Endothelial cell of umbilical vein (primary cell): ENCODE measurements at regions of chr18 and their contacts with region 1.

Region 1: DNA sequence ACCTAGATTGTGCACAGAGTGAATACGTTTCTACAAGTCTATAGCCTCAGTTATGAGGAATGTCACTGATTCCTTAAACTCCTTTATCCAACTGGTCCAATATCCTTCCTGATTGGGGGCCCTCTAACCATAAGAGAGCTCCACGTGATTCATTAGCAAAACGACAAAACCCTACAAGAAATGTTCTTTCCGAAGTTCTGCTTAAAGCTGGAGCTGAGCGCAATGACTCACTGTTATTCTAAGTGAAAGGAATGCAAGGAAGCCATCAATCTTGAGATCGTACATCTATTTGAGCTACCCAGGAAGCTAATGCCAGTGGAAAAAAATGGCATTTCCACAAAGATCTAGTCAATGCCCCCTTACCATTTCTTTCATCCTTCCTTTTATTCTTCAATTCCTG is 354.9 kb upstream of the CDH20 start:
- DNase-seq: peak; percentile 93
- H3K4me3 ChIP-seq: no peak overlapping the region
- H3K27ac ChIP-seq: peak overlapping the region; percentile 21
- H3K4me1 ChIP-seq: peaks cover 45% of the 10 kb centered on the region
- H3K27me3 ChIP-seq: no peaks in the 10 kb centered on the region
- CTCF ChIP-seq: no peak
- POLR2A ChIP-seq: no peak

Region 2: DNA sequence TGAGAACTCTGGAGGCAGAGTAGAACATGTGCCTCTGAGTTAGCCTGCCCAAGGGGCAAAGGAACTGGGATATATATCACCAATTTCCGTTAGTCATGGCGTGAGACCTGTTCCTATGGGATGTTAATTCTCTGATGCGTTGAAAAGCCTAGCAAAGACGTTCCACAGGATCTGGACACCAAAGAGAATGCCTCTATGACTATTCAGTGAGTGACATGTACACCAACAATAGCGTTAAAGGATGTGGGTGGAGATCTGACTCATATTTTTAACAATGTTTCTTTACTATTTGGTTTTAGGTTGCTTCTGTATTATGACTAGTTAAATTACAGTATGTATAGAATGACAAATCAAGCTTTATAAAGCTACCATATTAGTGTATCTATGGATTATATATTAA is 284.9 kb before region 1 on chr18:
- CTCF ChIA-PET with region 1: no interaction called
- POLR2A ChIA-PET with region 1: no interaction called
- dilution Hi-C with region 1: no loop called
- intact Hi-C with region 1: loop called (anchors 5 kb)
- DNase-seq: peak; percentile 65
- H3K4me3 ChIP-seq: no peak overlapping the region
- H3K27ac ChIP-seq: peak overlapping the region; percentile 44
- H3K4me1 ChIP-seq: peaks cover 9% of the 10 kb centered on the region
- H3K27me3 ChIP-seq: no peaks in the 10 kb centered on the region
- CTCF ChIP-seq: no peak
- POLR2A ChIP-seq: no peak

Region 3: GRCh38 chr18:60754413-60755009 is 223.8 kb before region 1 on chr18:
- CTCF ChIA-PET with region 1: no interaction called
- POLR2A ChIA-PET with region 1: no interaction called
- dilution Hi-C with region 1: no loop called
- intact Hi-C with region 1: loop called (anchors 2 kb)
- DNase-seq: peak; percentile 87
- H3K4me3 ChIP-seq: peak overlapping the region in 1 of 3 experiments; percentile 23
- H3K27ac ChIP-seq: peak overlapping the region; percentile 55
- H3K4me1 ChIP-seq: peaks cover 23% of the 10 kb centered on the region
- H3K27me3 ChIP-seq: no peaks in the 10 kb centered on the region
- CTCF ChIP-seq: no peak
- POLR2A ChIP-seq: no peak

Region 4: GRCh38 chr18:60873708-60874107 is 104.6 kb before region 1 on chr18:
- CTCF ChIA-PET with region 1: no interaction called
- POLR2A ChIA-PET with region 1: interaction called, 3 read pairs
- dilution Hi-C with region 1: no loop called
- intact Hi-C with region 1: loop called (anchors 2 kb)
- DNase-seq: peak; percentile 73
- H3K4me3 ChIP-seq: no peak overlapping the region
- H3K27ac ChIP-seq: no peak overlapping the region
- H3K4me1 ChIP-seq: peaks cover 19% of the 10 kb centered on the region
- H3K27me3 ChIP-seq: no peaks in the 10 kb centered on the region
- CTCF ChIP-seq: no peak
- POLR2A ChIP-seq: no peak

Region 5: GRCh38 chr18:60892850-60893249 is 85.5 kb before region 1 on chr18:
- CTCF ChIA-PET with region 1: interaction called, 4 read pairs
- POLR2A ChIA-PET with region 1: no interaction called
- dilution Hi-C with region 1: no loop called
- intact Hi-C with region 1: loop called (anchors 1 kb)
- DNase-seq: no peak
- H3K4me3 ChIP-seq: no peak overlapping the region
- H3K27ac ChIP-seq: peak overlapping the region; percentile 68
- H3K4me1 ChIP-seq: peaks cover 29% of the 10 kb centered on the region
- H3K27me3 ChIP-seq: no peaks in the 10 kb centered on the region
- CTCF ChIP-seq: no peak
- POLR2A ChIP-seq: no peak

Region 6: GRCh38 chr18:60966876-60967275 is 11.5 kb before region 1 on chr18:
- CTCF ChIA-PET with region 1: interaction called, 18 read pairs
- POLR2A ChIA-PET with region 1: no interaction called
- dilution Hi-C with region 1: no loop called
- intact Hi-C with region 1: loop called (anchors 1 kb)
- DNase-seq: peak; percentile 76
- H3K4me3 ChIP-seq: no peak overlapping the region
- H3K27ac ChIP-seq: peak overlapping the region; percentile 2
- H3K4me1 ChIP-seq: peaks cover 16% of the 10 kb centered on the region
- H3K27me3 ChIP-seq: no peaks in the 10 kb centered on the region
- CTCF ChIP-seq: no peak
- POLR2A ChIP-seq: no peak

Region 7: GRCh38 chr18:61085761-61086160 is 107.4 kb after region 1 on chr18:
- CTCF ChIA-PET with region 1: interaction called, 3 read pairs
- POLR2A ChIA-PET with region 1: no interaction called
- dilution Hi-C with region 1: no loop called
- intact Hi-C with region 1: loop called (anchors 2 kb)
- DNase-seq: no peak
- H3K4me3 ChIP-seq: no peak overlapping the region
- H3K27ac ChIP-seq: no peak overlapping the region
- H3K4me1 ChIP-seq: no peaks in the 10 kb centered on the region
- H3K27me3 ChIP-seq: no peaks in the 10 kb centered on the region
- CTCF ChIP-seq: no peak
- POLR2A ChIP-seq: no peak